AG04450 (cell line): ENCODE measurements at regions of chr3 and their contacts with region 1.

Region 1: DNA sequence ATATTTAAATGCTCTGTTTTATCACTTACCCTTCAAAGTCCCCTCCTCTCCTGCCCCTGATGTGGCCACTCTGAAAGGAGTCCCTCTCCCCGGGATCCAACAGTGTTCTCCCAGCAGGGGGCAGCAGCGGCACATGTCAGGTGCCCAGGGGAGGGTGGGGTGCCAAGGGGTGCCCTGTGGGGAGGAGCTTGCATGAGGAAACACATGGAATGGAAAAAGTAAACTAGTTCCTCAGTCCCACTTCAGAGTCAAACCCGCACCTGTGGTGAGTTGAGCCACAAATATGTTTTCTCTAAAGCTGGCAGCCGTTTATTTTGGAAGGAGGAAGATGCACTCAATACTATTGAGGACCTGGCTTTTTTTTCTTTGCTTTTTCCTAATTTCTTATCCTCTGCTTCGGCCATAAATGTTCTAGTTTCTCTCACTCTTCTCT is 30.1 kb upstream of the NRROS start:
- DNase-seq: peak; percentile 32
- H3K4me3 ChIP-seq: no peak overlapping the region
- H3K27ac ChIP-seq: no peak overlapping the region
- H3K27me3 ChIP-seq: no peaks in the 10 kb centered on the region
- CTCF ChIP-seq: peak; percentile 85

Region 2: DNA sequence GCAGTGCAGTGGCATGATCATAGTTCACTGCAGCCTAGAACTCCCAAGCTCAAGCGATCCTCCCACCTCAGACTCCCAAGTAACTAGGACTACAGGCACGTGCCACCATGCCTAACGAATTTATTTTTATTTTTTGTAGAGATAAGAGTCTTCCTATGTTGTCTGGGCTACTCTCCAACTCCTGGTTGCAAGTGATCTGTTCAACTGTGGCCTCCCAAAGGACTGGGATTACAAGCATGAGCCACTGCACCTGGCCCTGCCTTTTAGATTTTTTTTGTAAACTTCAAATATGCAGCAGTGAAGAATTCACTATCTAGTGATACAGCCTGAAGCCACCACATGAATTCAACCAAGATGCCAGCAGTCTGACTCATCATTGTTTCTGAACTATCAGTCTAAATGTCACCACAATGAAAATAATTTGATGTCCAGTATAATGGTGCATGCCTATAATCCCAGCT is 209.8 kb before region 1 on chr3:
- CTCF ChIA-PET with region 1: no interaction called
- POLR2A ChIA-PET with region 1: no interaction called
- DNase-seq: no peak
- H3K4me3 ChIP-seq: no peak overlapping the region
- H3K27ac ChIP-seq: no peak overlapping the region
- H3K27me3 ChIP-seq: no peaks in the 10 kb centered on the region
- CTCF ChIP-seq: no peak

Region 3: DNA sequence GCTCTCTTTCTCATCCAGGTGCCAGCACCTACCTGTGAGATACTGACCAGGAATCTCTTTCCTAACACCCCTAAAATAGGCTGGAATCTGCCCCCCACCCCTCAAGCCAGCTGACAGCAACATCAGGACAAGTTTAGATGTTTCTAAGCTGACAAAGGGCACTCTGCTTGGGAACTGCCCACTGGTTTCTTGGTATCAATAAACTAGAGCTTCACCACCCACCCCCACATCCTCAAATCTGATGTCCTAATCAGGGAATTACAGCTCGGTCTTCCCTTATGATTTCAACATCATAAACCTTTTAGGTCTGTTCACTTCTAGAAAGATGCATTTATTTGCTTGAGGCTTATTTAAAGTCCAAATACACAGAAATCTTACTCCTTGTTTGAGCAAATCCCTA is 68.0 kb after region 1 on chr3:
- CTCF ChIA-PET with region 1: interaction called, 26 read pairs
- POLR2A ChIA-PET with region 1: no interaction called
- DNase-seq: no peak
- H3K4me3 ChIP-seq: no peak overlapping the region
- H3K27ac ChIP-seq: no peak overlapping the region
- H3K27me3 ChIP-seq: peaks cover 13% of the 10 kb centered on the region
- CTCF ChIP-seq: no peak

Region 4: DNA sequence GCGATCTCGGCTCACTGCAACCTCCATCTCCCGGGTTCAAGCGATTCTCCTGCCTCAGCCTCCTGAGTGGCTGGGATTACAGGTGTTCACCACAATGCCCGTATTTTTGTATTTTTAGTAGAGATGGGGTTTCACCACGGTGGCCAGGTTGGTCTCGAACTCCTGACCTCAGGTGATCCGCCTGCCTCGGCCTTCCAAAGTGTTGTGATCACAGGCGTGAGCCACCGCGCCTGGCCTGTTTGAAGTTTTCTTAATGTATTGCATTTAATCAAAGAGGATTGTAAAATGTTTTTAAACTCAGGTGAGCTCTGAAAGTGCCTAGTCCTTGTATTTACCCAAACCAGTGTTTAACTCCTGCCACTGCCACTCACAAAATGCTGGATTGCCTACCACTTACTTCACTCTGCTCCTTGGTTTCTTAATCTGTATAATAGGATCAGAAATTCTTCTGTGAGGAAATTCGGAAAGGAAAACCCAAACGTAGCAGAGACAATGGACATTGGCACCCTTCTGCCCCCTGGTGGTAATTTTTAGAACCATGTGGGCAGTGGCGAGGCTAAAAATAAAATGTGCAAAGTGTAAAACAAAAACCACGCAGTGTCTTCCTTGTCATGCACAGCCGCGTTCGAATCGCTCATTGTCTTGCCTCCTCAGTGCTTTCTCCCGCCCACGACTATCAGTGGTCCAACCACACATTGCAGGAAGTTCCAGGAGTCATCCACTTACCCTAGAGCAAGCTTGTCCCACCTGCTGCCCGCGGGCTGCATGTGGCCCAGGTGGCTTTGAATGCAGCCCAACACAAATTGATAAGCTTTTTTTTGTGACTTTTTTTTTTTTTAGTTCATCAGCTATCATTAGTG is 75.4 kb after region 1 on chr3:
- CTCF ChIA-PET with region 1: interaction called, 209 read pairs
- POLR2A ChIA-PET with region 1: interaction called, 3 read pairs
- DNase-seq: peak; percentile 7
- H3K4me3 ChIP-seq: no peak overlapping the region
- H3K27ac ChIP-seq: no peak overlapping the region
- H3K27me3 ChIP-seq: peaks cover 6% of the 10 kb centered on the region
- CTCF ChIP-seq: peak; percentile 87

Region 5: GRCh38 chr3:196689941-196690660 is 80.7 kb after region 1 on chr3:
- CTCF ChIA-PET with region 1: interaction called, 209 read pairs
- POLR2A ChIA-PET with region 1: interaction called, 3 read pairs
- DNase-seq: no peak
- H3K4me3 ChIP-seq: no peak overlapping the region
- H3K27ac ChIP-seq: no peak overlapping the region
- H3K27me3 ChIP-seq: peaks cover 2% of the 10 kb centered on the region
- CTCF ChIP-seq: no peak